A549 (cell line): ENCODE measurements at regions of chr19 and their contacts with region 1.

Region 1: GRCh38 chr19:11137542-11138384 is 17.8 kb downstream of the SPC24 start:
- DNase-seq: peak; percentile 55 to 82
- ATAC-seq: peak; percentile 53 to 64
- H3K4me3 ChIP-seq: peak overlapping the region; percentile 18; the same call in 1 of the 3 replicates
- H3K27ac ChIP-seq: peak overlapping the region; percentile 98 to 100
- H3K4me1 ChIP-seq: peaks cover 44% of the 10 kb centered on the region
- CTCF ChIP-seq: peak; percentile 76
- EP300 ChIP-seq: no peak; a peak in 1 of 5 replicates
- POLR2A ChIP-seq: peak; percentile 22; the same call in 1 of the 2 replicates
- RAD21 ChIP-seq: peak; percentile 85 to 92

Region 2: DNA sequence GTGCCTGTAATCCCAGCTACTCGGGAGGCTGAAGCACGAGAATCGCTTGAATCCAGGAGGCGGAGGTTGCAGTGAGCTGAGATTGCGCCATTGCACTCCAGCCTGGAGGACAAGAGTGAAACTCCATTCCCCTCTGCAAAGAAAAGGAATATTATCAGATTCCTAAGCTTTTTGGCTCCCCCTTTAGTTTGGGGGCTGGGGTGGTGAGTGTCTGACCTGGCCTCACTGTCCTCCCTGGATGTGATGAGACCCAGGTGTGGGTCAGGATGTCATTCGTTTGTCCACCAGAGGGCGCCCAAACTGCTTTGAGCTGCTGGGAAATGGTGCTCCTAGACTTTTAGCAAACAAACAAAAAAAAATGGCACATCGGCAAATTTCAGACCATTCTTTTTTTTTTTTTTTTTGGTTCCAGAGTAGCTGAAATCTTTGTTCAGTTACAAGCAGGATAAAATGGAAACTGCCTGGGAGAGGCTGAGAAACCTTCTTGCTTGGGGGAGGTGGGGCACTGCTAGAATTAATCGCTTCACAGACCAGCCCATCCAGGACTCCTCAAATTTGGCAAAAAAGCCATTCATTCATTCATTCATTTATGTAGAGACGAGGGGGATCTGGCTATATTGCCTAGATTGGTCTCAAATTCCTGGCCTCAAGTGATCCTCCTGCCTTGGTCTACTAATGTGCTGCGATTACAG is 11.6 kb before region 1 on chr19:
- CTCF ChIA-PET with region 1: interaction called, 18 read pairs
- POLR2A ChIA-PET with region 1: interaction called, 3 read pairs
- DNase-seq: peak; percentile 38 to 78
- ATAC-seq: peak; percentile 80 to 87
- H3K4me3 ChIP-seq: no peak overlapping the region
- H3K27ac ChIP-seq: no peak overlapping the region
- H3K4me1 ChIP-seq: peaks cover 9% of the 10 kb centered on the region; the same call in 2 of the 3 replicates
- CTCF ChIP-seq: peak; percentile 63
- EP300 ChIP-seq: no peak
- POLR2A ChIP-seq: no peak
- RAD21 ChIP-seq: peak; percentile 54 to 58; a peak in 4 of 5 replicates

Region 3: DNA sequence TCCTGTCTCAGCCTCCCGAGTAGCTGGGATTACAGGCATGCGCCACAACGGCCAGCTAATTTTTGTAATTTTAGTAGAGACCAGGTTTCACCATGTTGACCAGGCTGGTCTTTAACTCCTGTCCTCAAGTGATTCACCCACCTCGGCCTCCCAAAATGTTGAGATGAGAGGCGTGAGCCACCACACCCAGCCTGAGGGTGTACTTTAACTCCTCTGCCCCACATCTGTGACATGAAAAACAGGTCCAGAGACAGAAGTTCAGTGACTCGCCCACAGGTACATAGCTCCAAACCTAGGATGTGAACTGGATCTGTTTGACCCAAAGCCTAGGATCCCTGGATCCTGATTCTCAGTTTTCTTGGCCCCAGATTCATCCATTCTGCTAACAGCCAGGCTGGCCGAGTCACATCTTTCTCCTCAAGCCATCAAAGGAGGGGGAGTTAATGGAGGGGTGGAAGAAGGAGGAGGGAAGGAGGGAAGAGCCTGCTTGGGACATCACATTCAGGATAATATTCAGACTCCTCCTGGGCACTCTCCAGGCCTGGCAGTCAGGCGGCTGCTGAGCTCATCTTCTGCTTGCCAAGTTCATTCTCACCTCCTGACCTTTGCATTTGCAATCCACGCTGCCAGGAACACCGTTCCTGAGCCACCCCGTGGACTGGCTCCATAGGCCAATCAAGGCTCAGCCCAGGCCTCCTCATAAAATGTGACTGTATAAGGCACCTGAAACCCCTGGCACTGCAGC is 14.7 kb after region 1 on chr19:
- CTCF ChIA-PET with region 1: interaction called, 15 read pairs
- POLR2A ChIA-PET with region 1: interaction called, 6 read pairs
- DNase-seq: peak in 1 of 2 experiments; percentile 63
- ATAC-seq: 0 out of 6 replicates have a peak, but pooled peaks of 1 of the 2 experiments have one; percentile 30
- H3K4me3 ChIP-seq: no peak overlapping the region
- H3K27ac ChIP-seq: peak overlapping the region; percentile 79 to 86
- H3K4me1 ChIP-seq: peaks cover 26% of the 10 kb centered on the region
- CTCF ChIP-seq: no peak
- EP300 ChIP-seq: no peak
- POLR2A ChIP-seq: no peak
- RAD21 ChIP-seq: no peak

Region 4: GRCh38 chr19:11197264-11198174 is 59.8 kb after region 1 on chr19 and contains the start of gene KANK2:
- CTCF ChIA-PET with region 1: interaction called, 40 read pairs
- POLR2A ChIA-PET with region 1: interaction called, 8 read pairs
- DNase-seq: peak; percentile 75 to 77
- ATAC-seq: peak; percentile 84 to 86
- H3K4me3 ChIP-seq: peak within 1 kb of the TSS; percentile 66
- H3K27ac ChIP-seq: peak within 1 kb of the TSS; percentile 92 to 98
- H3K4me1 ChIP-seq: peaks cover 37% of the 10 kb centered on the region
- CTCF ChIP-seq: peak; percentile 5; the same call in 1 of the 3 replicates
- EP300 ChIP-seq: peak in 1 of 2 experiments; percentile 36; a peak in 2 of 5 replicates
- POLR2A ChIP-seq: peak; percentile 60
- RAD21 ChIP-seq: no peak
- polyA plus RNA-seq, gene KANK2: 20.5 and 35.5 TPM in 2 replicates

Region 5: DNA sequence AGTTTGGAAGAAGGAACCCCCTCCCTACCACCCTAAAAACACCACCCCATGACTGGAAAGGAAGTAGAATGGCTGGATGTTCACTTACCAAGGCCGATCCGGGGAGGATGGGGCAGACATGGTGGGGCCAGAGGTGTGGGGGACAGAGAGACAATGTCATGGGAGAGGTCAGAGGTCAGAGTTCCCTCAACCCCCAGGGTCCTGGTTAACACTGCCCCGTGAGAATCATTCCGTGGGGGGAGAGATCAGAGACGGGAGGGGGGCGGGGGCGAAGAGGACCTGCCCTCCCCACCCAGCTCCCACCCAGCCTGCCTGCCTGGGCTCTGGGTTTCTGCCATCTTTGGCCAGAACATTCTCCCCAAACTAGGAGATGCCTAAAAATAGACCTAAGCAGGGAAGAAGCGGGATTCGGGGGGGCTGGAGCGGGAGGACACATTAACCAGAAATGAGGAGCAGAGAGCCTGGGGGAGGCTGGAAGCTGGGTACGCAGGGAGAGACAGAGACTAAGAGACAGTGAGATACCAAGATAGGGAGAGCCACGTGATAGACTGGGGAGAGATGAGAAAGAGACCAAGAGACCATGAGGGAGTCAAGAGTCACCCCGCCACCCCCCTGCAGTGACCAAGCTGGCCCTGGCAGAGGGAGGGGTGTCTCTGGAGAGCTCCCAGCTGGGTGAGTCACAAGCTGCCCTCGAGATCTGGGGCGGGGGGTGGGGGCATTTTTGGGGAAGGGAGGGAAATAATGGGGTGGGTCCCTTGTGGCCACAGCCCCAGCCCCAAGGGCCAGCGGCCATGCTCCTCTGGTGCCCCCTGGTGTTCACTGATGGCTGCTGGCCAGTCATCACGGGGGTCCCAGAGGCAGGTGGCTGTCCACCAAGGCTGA is 65.7 kb after region 1 on chr19:
- CTCF ChIA-PET with region 1: interaction called, 57 read pairs
- POLR2A ChIA-PET with region 1: interaction called, 18 read pairs
- DNase-seq: peak; percentile 64 to 72
- ATAC-seq: peak; percentile 79 to 81
- H3K4me3 ChIP-seq: no peak overlapping the region
- H3K27ac ChIP-seq: peak overlapping the region; percentile 93 to 98
- H3K4me1 ChIP-seq: peaks cover 35% of the 10 kb centered on the region
- CTCF ChIP-seq: peak; percentile 80
- EP300 ChIP-seq: no peak
- POLR2A ChIP-seq: no peak
- RAD21 ChIP-seq: peak; percentile 83 to 96